ENCODE measurements at regions of chr6 and their contacts with region 1.

Region 1: DNA sequence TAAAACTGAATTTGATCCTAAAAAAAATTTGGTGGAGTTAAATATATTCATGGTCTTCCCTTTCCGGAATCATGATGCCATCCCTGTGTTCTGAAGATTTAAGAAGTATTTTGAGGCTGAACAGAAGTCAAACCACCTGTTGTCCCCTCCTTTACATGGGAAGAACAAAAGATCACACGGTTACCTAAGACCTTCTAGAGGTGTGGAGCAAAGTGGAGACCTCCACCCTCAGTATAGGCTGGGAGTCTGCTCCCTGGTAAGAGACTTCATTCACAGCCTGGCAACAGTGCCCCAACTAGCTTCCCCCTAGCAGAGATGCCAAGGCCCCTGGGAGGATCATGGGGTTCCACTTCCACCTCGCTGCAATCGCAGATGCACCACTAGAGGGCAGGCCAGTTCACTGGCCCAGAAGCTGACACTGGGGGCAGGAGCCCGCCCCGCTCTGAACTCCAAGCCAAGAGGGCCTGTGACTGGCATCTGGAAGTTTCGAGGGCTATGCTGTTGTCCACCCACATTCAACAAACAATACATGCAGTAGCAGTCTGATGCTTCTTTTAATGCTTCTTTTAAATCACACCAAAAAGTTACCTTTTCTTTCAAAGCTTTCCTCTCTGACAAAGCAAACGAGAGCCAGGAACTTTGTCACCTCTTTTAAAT is 19.5 kb upstream of the UBE2J1 start:
- H3K4me3 ChIP-seq: no peak overlapping the region
- H3K27ac ChIP-seq: no peak overlapping the region
- H3K4me1 ChIP-seq: peaks cover 11% of the 10 kb centered on the region
- CTCF ChIP-seq: peak; percentile 76

Region 2: GRCh38 chr6:88519301-88520016 is 852.5 kb before region 1 on chr6:
- CTCF ChIA-PET with region 1: no interaction called
- POLR2A ChIA-PET with region 1: no interaction called
- H3K4me3 ChIP-seq: no peak overlapping the region
- H3K27ac ChIP-seq: no peak overlapping the region
- H3K4me1 ChIP-seq: no peaks in the 10 kb centered on the region
- CTCF ChIP-seq: no peak

Region 3: DNA sequence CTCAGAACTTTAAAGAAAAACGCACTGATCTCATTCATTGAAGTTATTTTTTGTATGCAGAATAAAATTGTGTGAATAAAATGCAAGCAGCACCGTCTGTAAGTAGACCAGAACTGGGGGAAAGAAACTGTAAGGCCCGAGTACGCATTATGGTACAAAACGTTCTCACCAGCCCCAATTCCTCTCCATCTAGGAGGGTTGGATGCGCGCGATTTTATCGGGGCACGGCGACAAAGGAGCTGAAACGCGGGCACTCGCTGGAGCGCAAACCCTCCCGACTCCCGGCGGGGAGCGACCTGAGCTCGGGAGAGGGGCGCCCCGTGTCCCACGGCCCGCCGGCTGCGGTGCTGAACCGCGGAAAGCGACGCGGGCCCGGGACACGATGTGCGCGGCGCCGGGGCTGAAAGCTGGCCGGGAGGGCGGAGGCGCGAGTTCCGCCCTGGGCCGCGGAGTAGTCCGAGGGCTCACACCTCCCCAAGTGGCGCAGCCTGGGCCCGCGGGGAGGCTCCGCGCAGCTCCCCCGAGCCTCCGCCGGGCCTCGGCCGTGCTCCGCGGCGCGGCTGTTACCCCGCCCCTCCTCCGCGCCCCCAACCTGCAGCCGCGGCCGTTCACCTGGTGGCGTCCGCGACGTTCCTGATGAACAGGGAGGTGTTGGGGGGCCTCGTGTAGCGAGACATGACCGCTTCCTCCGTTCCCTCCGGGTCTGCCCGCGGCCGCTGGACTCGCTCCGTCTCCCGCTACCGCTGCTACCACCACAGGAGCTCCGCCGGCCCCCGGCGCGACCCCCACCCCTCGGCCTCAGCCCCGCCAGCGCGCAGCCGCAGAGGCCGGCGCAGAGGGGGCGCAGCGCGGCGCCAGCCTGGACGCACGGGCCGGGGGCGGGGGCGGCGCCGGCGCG is 254.5 kb before region 1 on chr6 and contains the start of gene SRSF12:
- CTCF ChIA-PET with region 1: interaction called, 10 read pairs
- POLR2A ChIA-PET with region 1: no interaction called
- H3K4me3 ChIP-seq: peak within 1 kb of the TSS; percentile 58
- H3K27ac ChIP-seq: peak within 1 kb of the TSS; percentile 65; the same call in 1 of the 2 replicates
- H3K4me1 ChIP-seq: peaks cover 3% of the 10 kb centered on the region; the same call in 1 of the 2 replicates
- CTCF ChIP-seq: no peak; the same call in 1 of the 2 replicates

Region 4: GRCh38 chr6:89212472-89212871 is 159.5 kb before region 1 on chr6:
- CTCF ChIA-PET with region 1: no interaction called
- POLR2A ChIA-PET with region 1: no interaction called
- H3K4me3 ChIP-seq: no peak overlapping the region
- H3K27ac ChIP-seq: no peak overlapping the region
- H3K4me1 ChIP-seq: peaks cover 7% of the 10 kb centered on the region
- CTCF ChIP-seq: no peak

Region 5: DNA sequence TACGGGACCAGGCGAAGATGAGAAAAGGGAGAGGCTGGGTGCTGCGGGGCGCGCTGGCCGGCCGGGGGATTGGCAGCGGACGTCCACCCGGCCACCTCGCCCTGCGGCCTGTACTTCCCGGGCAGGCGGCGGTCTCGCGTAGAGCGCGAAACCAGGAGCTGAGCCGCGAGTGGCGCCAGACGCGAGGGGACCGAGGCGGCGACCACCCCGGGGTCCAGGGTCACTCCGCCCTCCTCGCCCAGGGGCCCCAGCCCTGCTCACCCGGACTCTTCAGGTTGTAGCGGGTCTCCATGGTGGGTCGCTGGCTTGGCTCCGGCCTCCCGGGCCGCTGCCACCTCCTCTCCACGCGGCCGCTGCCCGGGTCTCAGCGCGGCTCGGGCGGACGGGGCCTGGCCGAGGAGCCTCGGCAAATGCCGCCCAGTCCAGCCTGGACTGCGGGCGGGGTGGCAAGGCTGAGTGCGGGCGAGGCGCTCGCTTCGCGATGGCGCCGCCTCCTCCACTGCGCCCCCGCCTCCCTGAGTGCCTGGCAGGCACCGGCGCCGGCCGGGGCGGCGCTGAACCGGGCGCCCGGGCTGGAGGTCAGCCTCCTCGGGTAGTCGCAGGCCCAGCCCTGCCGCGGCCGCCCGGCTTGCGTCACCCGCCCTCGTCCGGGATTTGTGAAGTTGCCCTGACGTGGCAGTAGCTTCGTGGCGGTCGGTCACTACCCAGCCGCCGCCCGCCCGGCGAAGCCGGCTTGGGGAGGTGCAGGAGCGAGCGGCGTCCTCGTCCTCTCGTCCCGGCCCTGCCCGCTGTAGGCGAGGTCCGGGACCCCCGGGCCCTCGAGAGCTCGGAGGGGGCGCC is 19.5 kb before region 1 on chr6 and contains the start of gene UBE2J1:
- CTCF ChIA-PET with region 1: interaction called, 43 read pairs
- POLR2A ChIA-PET with region 1: no interaction called
- H3K4me3 ChIP-seq: peak within 1 kb of the TSS; percentile 91
- H3K27ac ChIP-seq: peak within 1 kb of the TSS; percentile 99
- H3K4me1 ChIP-seq: peaks cover 15% of the 10 kb centered on the region
- CTCF ChIP-seq: peak; percentile 89

Region 6: GRCh38 chr6:89398762-89399525 is 27.0 kb after region 1 on chr6:
- CTCF ChIA-PET with region 1: interaction called, 12 read pairs
- POLR2A ChIA-PET with region 1: no interaction called
- H3K4me3 ChIP-seq: no peak overlapping the region
- H3K27ac ChIP-seq: no peak overlapping the region
- H3K4me1 ChIP-seq: no peaks in the 10 kb centered on the region
- CTCF ChIP-seq: no peak

Region 7: GRCh38 chr6:89597988-89598692 is 226.2 kb after region 1 on chr6:
- CTCF ChIA-PET with region 1: interaction called, 14 read pairs
- POLR2A ChIA-PET with region 1: no interaction called
- H3K4me3 ChIP-seq: no peak overlapping the region
- H3K27ac ChIP-seq: no peak overlapping the region
- H3K4me1 ChIP-seq: no peaks in the 10 kb centered on the region
- CTCF ChIP-seq: no peak

Region 8: DNA sequence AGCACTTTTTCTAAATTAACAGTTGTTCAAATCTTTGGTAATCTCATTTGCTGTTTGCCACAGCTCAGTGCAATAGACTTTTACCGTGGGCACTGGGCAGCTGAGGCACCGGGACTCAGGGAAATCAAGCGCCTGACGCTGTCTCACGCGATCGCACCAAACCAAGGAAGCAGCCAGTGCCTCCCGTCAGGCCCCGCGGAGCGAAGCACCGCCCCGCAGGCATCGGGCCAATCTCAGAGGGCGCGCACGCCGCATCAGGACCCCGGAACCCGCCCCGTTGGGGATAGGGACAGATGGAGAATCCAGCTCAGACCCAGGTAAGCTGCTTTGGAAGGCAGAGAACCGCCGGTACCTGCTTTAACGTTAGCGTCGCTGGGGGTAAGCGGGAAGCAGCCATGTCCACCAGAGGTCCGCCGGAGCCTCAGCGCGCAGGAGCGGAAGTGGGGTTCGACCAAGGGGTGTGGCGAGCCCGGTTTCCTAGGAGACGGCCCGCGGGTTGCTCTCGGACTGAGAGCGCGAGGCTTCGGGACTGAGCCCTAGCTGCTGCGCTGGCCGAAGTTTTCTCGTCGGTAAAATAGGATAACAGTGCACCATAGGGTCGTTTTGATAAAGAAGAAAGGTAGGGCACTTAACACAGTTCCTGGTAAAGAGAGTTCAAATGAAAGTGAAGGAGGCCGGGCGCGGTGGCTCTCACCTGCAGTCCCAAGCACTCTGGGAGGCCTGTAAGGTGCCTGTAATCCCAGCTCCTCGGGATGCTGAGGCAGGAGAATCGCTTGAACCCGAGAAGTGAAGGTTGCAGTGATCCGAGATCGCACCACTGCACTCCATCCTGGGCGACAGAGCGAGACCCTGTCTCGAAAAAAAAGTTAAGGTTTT is 266.6 kb after region 1 on chr6 and contains the start of gene LYRM2:
- CTCF ChIA-PET with region 1: interaction called, 18 read pairs
- POLR2A ChIA-PET with region 1: no interaction called
- H3K4me3 ChIP-seq: peak within 1 kb of the TSS; percentile 74
- H3K27ac ChIP-seq: peak within 1 kb of the TSS; percentile 80
- H3K4me1 ChIP-seq: peaks cover 3% of the 10 kb centered on the region; the same call in 1 of the 2 replicates
- CTCF ChIP-seq: peak; percentile 51; the same call in 1 of the 2 replicates

Region 9: GRCh38 chr6:89667872-89668556 is 296.0 kb after region 1 on chr6:
- CTCF ChIA-PET with region 1: no interaction called
- POLR2A ChIA-PET with region 1: no interaction called
- H3K4me3 ChIP-seq: no peak overlapping the region
- H3K27ac ChIP-seq: no peak overlapping the region
- H3K4me1 ChIP-seq: no peaks in the 10 kb centered on the region
- CTCF ChIP-seq: no peak